CD4-positive, alpha-beta T cell (primary cell): ENCODE measurements at regions of chr3 and their contacts with region 1.

Region 1: GRCh38 chr3:36868614-36869436 is 76.0 kb downstream of the TRANK1 start:
- DNase-seq: peak in 13 of 14 experiments; percentile 10 to 83 (median 27)
- ATAC-seq: peak; percentile 85
- H3K4me3 ChIP-seq: no peak overlapping the region
- H3K4me3 Mint-ChIP-seq: no peak overlapping the region
- H3K27ac ChIP-seq: no peak overlapping the region
- H3K27ac Mint-ChIP-seq: peak overlapping the region; percentile 12
- H3K4me1 ChIP-seq: peaks cover 18% of the 10 kb centered on the region
- H3K4me1 Mint-ChIP-seq: peaks cover 42% of the 10 kb centered on the region
- H3K27me3 ChIP-seq: no peaks in the 10 kb centered on the region
- H3K27me3 Mint-ChIP-seq: no peaks in the 10 kb centered on the region
- CTCF ChIP-seq: peak; percentile 68

Region 2: DNA sequence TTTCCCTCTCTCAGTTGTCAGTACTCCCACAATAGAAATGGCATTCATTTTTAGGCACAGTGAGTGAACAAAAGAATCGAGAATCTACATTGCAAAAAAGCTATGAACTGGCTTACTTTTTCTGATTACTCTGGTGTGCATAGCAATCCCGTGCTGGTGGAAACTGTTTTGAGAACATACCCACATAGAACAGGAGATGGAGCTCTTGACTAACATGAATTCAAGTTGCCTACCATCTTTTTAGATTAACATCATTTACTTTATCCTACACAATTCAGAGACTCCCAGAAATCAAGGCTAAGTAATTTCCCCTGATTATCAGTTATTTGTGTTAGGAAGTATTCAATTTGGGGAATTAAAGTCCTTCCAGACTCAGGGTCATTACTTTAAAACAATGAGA is 902.9 kb before region 1 on chr3:
- CTCF ChIA-PET with region 1: no interaction called
- POLR2A ChIA-PET with region 1: no interaction called
- intact Hi-C with region 1: loop called (anchors 5 to 10 kb)
- DNase-seq: peak in 2 of 14 experiments; percentile 8 to 13
- ATAC-seq: no peak
- H3K4me3 ChIP-seq: no peak overlapping the region
- H3K4me3 Mint-ChIP-seq: no peak overlapping the region
- H3K27ac ChIP-seq: no peak overlapping the region
- H3K27ac Mint-ChIP-seq: no peak overlapping the region
- H3K4me1 ChIP-seq: no peaks in the 10 kb centered on the region
- H3K4me1 Mint-ChIP-seq: no peaks in the 10 kb centered on the region
- H3K27me3 ChIP-seq: no peaks in the 10 kb centered on the region
- H3K27me3 Mint-ChIP-seq: no peaks in the 10 kb centered on the region
- CTCF ChIP-seq: no peak

Region 3: GRCh38 chr3:36729204-36730056 is 139.4 kb before region 1 on chr3:
- CTCF ChIA-PET with region 1: no interaction called
- POLR2A ChIA-PET with region 1: no interaction called
- intact Hi-C with region 1: loop called (anchors 2 kb)
- DNase-seq: peak in 3 of 14 experiments; percentile 45 to 54 (median 54)
- ATAC-seq: no peak
- H3K4me3 ChIP-seq: no peak overlapping the region
- H3K4me3 Mint-ChIP-seq: no peak overlapping the region
- H3K27ac ChIP-seq: no peak overlapping the region
- H3K27ac Mint-ChIP-seq: no peak overlapping the region
- H3K4me1 ChIP-seq: no peaks in the 10 kb centered on the region
- H3K4me1 Mint-ChIP-seq: no peaks in the 10 kb centered on the region
- H3K27me3 ChIP-seq: peaks cover 0 to 3% of the 10 kb centered on the region in 2 experiments
- H3K27me3 Mint-ChIP-seq: peaks cover 6% of the 10 kb centered on the region
- CTCF ChIP-seq: peak; percentile 65

Region 4: GRCh38 chr3:36904641-36905040 is 35.8 kb after region 1 on chr3:
- CTCF ChIA-PET with region 1: interaction called, 8 read pairs
- POLR2A ChIA-PET with region 1: interaction called, 4 read pairs
- intact Hi-C with region 1: loop called in 1 of 2 experiments (anchors 5 kb)
- DNase-seq: no peak
- ATAC-seq: no peak
- H3K4me3 ChIP-seq: no peak overlapping the region
- H3K4me3 Mint-ChIP-seq: peak overlapping the region; percentile 52
- H3K27ac ChIP-seq: peak overlapping the region in 1 of 2 donors; percentile 17
- H3K27ac Mint-ChIP-seq: peak overlapping the region; percentile 93
- H3K4me1 ChIP-seq: peaks cover 75% of the 10 kb centered on the region
- H3K4me1 Mint-ChIP-seq: peaks cover 79% of the 10 kb centered on the region
- H3K27me3 ChIP-seq: no peaks in the 10 kb centered on the region
- H3K27me3 Mint-ChIP-seq: no peaks in the 10 kb centered on the region
- CTCF ChIP-seq: no peak